Astrocyte of the cerebellum (primary cell): ENCODE measurements at regions of chr16 and their contacts with region 1.

Region 1: GRCh38 chr16:19831678-19832077 is 53.0 kb downstream of the GPRC5B start:
- DNase-seq: peak; percentile 45
- H3K4me3 ChIP-seq: no peak overlapping the region
- CTCF ChIP-seq: no peak

Region 2: GRCh38 chr16:19744670-19745069 is 87.0 kb before region 1 on chr16:
- in situ Hi-C with region 1: loop called (anchors 5 kb)
- DNase-seq: no peak
- H3K4me3 ChIP-seq: no peak overlapping the region
- CTCF ChIP-seq: no peak